ENCODE measurements at regions of chr6 and their contacts with region 1.

Region 1: DNA sequence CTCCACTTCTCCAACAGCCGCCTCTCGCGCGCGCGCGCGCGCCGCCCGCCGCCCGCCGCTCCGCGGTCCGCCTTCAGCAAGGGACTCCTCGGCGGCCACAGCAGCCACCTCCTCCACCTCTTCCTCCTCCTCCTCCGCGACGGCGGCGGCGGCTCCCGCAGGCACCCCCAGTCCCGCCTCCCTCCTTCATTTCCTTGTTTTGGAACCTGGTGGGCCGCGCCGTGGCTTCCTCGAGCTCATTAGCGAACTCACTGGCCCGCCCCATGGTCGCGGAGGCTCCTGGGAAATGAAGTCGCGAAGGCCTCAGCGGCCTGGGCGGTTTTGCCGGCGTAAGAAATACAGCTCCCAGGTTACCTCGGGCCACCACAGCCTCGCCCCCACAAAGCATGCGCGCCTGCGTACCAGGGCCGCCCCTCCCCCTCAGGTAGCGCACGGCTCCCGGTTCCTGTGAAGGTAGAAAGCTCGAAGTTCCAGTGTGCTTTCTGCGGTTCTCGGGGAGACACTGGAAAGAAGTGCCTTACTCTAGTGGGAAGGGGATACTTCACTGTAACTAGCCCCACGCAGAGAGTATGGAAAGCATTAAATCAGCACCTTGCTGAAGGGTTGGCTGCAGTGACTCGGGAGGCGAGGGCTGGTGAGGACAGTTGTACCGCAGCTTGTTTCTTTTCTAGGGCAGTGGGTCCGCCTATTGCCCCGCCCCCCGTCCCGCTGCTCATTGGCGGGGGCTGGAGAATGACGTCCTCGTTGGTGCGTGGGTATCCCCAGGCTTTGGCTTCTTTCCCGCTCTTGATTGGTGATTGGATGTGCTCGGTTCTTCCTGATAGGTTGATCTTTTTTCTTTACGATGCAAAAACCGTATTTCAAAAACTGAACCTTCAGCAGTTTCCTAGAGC is at the start of gene CDK19:
- DNase-seq: peak; percentile 98
- ATAC-seq: peak; percentile 95
- H3K4me3 ChIP-seq: peak within 1 kb of the TSS; percentile 79 to 91
- H3K27ac ChIP-seq: peak within 1 kb of the TSS; percentile 98
- H3K4me1 ChIP-seq: peaks cover 19% of the 10 kb centered on the region
- H3K27me3 ChIP-seq: no peaks in the 10 kb centered on the region
- CTCF ChIP-seq: no peak
- total RNA-seq, gene CDK19: 48.4 TPM

Region 2: DNA sequence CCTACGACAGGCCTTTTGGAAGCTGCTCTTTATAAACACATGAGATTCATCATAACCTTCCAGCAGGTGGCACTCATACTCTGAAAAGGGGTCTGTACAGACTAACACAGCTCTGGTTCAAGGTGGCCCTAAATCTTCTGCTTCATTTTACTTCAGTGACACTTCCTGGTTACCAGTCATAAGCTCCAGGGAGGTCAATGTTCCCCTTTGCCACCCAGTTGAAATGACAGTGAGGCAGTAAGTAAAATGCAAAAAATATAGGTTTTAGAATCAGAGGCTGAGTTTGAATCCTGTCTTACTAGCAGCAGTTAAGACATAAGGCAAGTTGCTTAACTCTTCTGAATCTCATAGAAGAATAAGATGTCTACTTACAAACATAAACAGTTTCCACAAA is 133.0 kb before region 1 on chr6:
- CTCF ChIA-PET with region 1: interaction called, 9 read pairs
- POLR2A ChIA-PET with region 1: interaction called, 4 read pairs
- in situ Hi-C with region 1: no loop called
- intact Hi-C with region 1: loop called (anchors 5 kb)
- DNase-seq: peak; percentile 92
- ATAC-seq: peak; percentile 99
- H3K4me3 ChIP-seq: no peak overlapping the region
- H3K27ac ChIP-seq: no peak overlapping the region; the same call in 1 of the 2 replicates
- H3K4me1 ChIP-seq: peaks cover 13% of the 10 kb centered on the region
- H3K27me3 ChIP-seq: no peaks in the 10 kb centered on the region
- CTCF ChIP-seq: peak; percentile 89

Region 3: DNA sequence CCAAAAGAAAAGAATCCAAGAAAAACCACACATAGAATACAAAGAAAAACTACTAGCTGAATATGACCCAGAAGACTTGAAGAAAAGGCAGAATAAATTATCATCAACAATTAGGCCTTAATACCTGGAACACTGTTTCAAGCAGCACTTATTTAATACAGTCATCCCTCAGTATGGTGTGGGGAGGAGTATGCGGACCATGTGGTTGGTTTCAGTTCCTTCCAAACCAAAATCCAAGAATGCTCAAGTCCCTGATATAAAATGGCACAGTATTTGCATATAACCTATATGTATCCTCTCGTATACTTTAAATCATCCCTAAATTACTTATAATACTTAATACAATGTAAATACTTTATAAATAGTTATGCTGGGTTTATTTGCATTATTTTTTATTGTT is 16.3 kb before region 1 on chr6:
- CTCF ChIA-PET with region 1: no interaction called
- POLR2A ChIA-PET with region 1: interaction called, 11 read pairs
- in situ Hi-C with region 1: no loop called
- intact Hi-C with region 1: no loop called
- DNase-seq: no peak
- ATAC-seq: no peak
- H3K4me3 ChIP-seq: no peak overlapping the region
- H3K27ac ChIP-seq: no peak overlapping the region
- H3K4me1 ChIP-seq: peaks cover 3% of the 10 kb centered on the region; the same call in 1 of the 2 replicates
- H3K27me3 ChIP-seq: no peaks in the 10 kb centered on the region
- CTCF ChIP-seq: no peak

Region 4: DNA sequence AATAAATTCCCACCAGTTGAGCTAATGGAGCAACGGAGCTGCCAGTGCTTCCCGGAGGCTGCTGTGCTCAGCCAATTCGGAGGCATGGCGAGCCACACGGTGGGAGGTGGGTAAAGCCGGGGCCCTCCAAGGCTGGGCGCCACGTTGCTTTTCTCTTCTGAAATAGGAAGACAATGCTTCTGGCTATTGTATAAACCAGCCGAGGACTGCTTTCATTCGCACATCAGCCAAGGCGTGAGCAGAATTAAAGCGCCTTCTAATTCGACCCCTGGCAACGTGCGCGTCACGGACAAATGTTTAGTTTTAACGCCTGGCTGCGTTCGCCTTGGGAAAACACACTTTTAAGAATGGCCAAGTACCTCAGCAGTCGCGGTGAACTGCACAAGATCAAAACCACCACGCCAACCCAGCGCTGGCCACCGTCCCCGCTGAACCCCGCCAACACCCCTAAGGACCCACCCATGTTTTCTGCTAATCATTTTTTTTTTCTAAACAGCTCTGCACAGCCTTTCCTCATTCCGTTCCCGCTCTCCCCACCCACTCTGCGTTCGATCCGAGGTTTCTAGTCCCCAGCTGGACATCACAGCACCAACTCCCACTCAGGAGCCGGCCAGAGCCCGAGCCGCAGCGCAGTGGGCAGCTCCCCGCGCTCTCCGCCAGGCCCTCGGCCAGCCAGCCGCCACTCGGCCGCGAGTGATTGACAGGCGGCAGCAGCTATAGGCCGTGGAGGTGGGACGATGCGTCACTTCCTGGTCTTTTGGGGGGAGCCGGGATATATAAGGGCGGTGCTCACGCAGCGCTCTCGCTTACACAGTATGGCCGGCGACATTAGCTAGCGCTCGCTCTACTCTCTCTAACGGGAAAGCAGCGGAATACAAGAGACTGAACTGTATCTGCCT is 58.8 kb after region 1 on chr6 and contains the start of gene AMD1:
- CTCF ChIA-PET with region 1: interaction called, 5 read pairs
- POLR2A ChIA-PET with region 1: interaction called, 98 read pairs
- in situ Hi-C with region 1: no loop called
- intact Hi-C with region 1: loop called (anchors 2 kb)
- DNase-seq: peak; percentile 96
- ATAC-seq: peak; percentile 92
- H3K4me3 ChIP-seq: peak within 1 kb of the TSS; percentile 85 to 88
- H3K27ac ChIP-seq: peak within 1 kb of the TSS; percentile 86
- H3K4me1 ChIP-seq: peaks cover 24% of the 10 kb centered on the region
- H3K27me3 ChIP-seq: no peaks in the 10 kb centered on the region
- CTCF ChIP-seq: no peak
- total RNA-seq, gene AMD1: 81.7 TPM

Region 5: DNA sequence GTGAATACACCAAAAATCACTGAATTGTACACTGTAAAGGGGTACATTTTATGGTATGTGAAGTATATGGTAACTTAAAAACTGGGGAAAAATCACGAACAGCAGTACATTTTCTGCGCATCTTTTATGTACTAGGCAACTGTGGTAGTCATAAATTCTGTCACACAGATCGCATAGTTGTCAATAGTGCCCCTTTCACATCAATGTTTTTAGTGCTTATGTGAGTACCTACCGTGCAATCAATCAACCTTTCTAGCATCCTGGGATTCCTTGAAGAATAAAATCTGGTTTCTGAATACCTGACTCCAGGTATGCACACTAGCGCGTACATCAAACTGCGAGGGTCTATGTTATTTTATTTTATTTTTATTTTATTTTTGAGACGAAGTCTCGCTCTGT is 165.7 kb after region 1 on chr6:
- CTCF ChIA-PET with region 1: no interaction called
- POLR2A ChIA-PET with region 1: interaction called, 13 read pairs
- in situ Hi-C with region 1: no loop called
- intact Hi-C with region 1: no loop called
- DNase-seq: no peak
- ATAC-seq: 0 out of 2 replicates have a peak, but pooled peaks have one; percentile 1
- H3K4me3 ChIP-seq: peak overlapping the region; percentile 73 to 81
- H3K27ac ChIP-seq: peak overlapping the region; percentile 96
- H3K4me1 ChIP-seq: peaks cover 4% of the 10 kb centered on the region; the same call in 1 of the 2 replicates
- H3K27me3 ChIP-seq: no peaks in the 10 kb centered on the region
- CTCF ChIP-seq: no peak

Region 6: GRCh38 chr6:111382476-111383300 is 567.2 kb after region 1 on chr6:
- CTCF ChIA-PET with region 1: no interaction called
- POLR2A ChIA-PET with region 1: no interaction called
- in situ Hi-C with region 1: no loop called
- intact Hi-C with region 1: no loop called
- DNase-seq: no peak
- ATAC-seq: no peak
- H3K4me3 ChIP-seq: no peak overlapping the region
- H3K27ac ChIP-seq: no peak overlapping the region
- H3K4me1 ChIP-seq: no peaks in the 10 kb centered on the region
- H3K27me3 ChIP-seq: no peaks in the 10 kb centered on the region
- CTCF ChIP-seq: no peak

Region 7: GRCh38 chr6:111534231-111534751 is 718.8 kb after region 1 on chr6:
- CTCF ChIA-PET with region 1: no interaction called
- POLR2A ChIA-PET with region 1: no interaction called
- in situ Hi-C with region 1: no loop called
- intact Hi-C with region 1: no loop called
- DNase-seq: no peak
- ATAC-seq: peak; percentile 71
- H3K4me3 ChIP-seq: no peak overlapping the region
- H3K27ac ChIP-seq: peak overlapping the region; percentile 41; the same call in 1 of the 2 replicates
- H3K4me1 ChIP-seq: peaks cover 29% of the 10 kb centered on the region
- H3K27me3 ChIP-seq: no peaks in the 10 kb centered on the region
- CTCF ChIP-seq: no peak